Endothelial cell of umbilical vein (primary cell): ENCODE measurements at regions of chr2 and their contacts with region 1.

Region 1: GRCh38 chr2:119702918-119703401 is 24.0 kb downstream of the TMEM177 start:
- DNase-seq: peak; percentile 67
- H3K4me3 ChIP-seq: no peak overlapping the region
- H3K27ac ChIP-seq: no peak overlapping the region
- H3K4me1 ChIP-seq: no peaks in the 10 kb centered on the region
- H3K27me3 ChIP-seq: no peaks in the 10 kb centered on the region
- CTCF ChIP-seq: peak; percentile 96
- POLR2A ChIP-seq: no peak

Region 2: GRCh38 chr2:119598596-119599263 is 104.2 kb before region 1 on chr2:
- CTCF ChIA-PET with region 1: no interaction called
- POLR2A ChIA-PET with region 1: no interaction called
- dilution Hi-C with region 1: no loop called
- intact Hi-C with region 1: no loop called
- DNase-seq: no peak
- H3K4me3 ChIP-seq: no peak overlapping the region
- H3K27ac ChIP-seq: no peak overlapping the region
- H3K4me1 ChIP-seq: no peaks in the 10 kb centered on the region
- H3K27me3 ChIP-seq: peaks cover 2 to 8% of the 10 kb centered on the region in 2 experiments
- CTCF ChIP-seq: no peak
- POLR2A ChIP-seq: no peak

Region 3: DNA sequence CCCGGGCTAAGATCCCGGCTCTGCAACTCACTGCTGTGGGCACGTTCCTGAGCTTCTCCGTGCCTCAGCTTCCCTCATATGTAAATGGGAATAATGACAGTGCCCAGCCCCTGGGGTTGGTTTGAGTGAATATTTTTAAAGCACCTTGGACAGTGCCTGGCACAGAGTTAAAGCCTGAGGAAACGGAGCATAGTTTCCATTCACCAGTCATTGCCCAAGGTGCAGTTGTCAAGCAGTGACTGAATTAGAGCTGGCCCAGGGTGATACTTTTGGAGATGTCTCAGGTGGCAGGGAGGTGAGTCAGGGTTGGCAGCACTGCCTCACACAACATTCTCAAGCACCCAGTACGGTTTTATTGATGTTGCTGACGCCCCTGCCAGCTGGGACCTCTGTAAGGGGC is 11.8 kb before region 1 on chr2:
- CTCF ChIA-PET with region 1: interaction called, 12 read pairs
- POLR2A ChIA-PET with region 1: no interaction called
- dilution Hi-C with region 1: no loop called
- intact Hi-C with region 1: no loop called
- DNase-seq: no peak
- H3K4me3 ChIP-seq: no peak overlapping the region
- H3K27ac ChIP-seq: no peak overlapping the region
- H3K4me1 ChIP-seq: no peaks in the 10 kb centered on the region
- H3K27me3 ChIP-seq: no peaks in the 10 kb centered on the region
- CTCF ChIP-seq: no peak
- POLR2A ChIP-seq: no peak

Region 4: GRCh38 chr2:119713804-119714490 is 11.0 kb after region 1 on chr2:
- CTCF ChIA-PET with region 1: interaction called, 19 read pairs
- POLR2A ChIA-PET with region 1: no interaction called
- dilution Hi-C with region 1: no loop called
- intact Hi-C with region 1: no loop called
- DNase-seq: no peak
- H3K4me3 ChIP-seq: no peak overlapping the region
- H3K27ac ChIP-seq: no peak overlapping the region
- H3K4me1 ChIP-seq: no peaks in the 10 kb centered on the region
- H3K27me3 ChIP-seq: peaks cover 0 to 6% of the 10 kb centered on the region in 2 experiments
- CTCF ChIP-seq: no peak
- POLR2A ChIP-seq: no peak

Region 5: DNA sequence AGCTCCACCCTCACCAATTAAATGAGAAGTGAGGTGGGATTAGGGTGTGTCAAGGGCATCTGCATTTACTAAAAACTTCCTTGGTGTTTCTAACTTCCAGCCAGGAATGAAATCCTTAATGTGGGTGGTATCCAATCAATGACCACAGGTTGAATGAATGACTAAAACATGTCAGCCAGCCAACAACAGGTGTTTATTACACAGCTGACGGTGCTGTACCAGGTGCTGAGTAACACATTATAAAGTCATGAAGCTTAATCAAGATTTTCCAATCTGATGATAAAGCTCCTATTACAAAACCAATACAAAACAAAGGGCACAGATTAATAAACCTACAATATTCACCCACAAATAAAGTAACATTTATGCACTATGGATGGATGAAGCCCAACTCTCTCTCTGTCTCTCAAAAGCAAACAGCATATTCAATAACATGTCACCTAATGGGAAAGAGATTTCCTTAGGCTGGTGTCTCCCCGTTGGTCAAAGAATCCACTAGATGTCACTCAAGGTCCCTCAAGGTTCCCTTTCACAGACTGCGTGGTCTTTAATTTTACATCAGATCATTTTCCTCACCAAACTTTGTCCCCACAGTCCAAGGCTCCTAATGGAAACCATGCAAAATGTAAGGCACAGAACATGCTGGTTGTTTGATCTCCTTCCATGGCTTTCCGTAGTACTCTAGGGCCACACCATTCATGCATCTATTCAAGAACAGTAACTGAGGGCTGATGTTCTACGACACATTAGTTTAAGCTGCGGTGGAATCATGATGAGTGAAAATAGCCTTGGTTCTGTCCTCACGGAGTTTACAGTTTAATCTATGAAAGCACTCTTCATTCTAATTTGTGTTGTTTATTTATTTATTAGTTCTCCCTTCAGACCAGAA is 50.3 kb after region 1 on chr2:
- CTCF ChIA-PET with region 1: interaction called, 19 read pairs
- POLR2A ChIA-PET with region 1: no interaction called
- dilution Hi-C with region 1: no loop called
- intact Hi-C with region 1: loop called (anchors 1 kb)
- DNase-seq: peak; percentile 65
- H3K4me3 ChIP-seq: no peak overlapping the region
- H3K27ac ChIP-seq: no peak overlapping the region
- H3K4me1 ChIP-seq: peaks cover 14% of the 10 kb centered on the region
- H3K27me3 ChIP-seq: no peaks in the 10 kb centered on the region
- CTCF ChIP-seq: peak; percentile 67 to 68
- POLR2A ChIP-seq: no peak

Region 6: DNA sequence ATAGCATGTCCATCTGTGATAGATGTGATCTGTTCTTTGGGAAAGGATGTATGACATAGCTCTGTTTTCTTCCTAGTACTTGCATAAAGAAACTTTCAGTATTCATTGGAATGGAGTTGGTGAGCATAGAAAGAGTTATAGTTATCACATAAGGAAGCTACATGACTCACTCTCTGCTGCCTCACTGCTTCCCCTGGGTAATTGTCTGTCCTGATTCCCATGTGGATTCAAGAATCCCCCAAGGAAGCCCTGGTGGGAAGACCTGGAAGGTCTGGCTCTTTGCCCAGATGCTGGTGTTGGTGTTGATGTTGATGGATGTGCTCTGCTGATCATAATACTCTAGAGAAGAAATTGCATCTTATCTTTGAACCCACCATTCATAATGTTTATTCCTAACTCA is 117.3 kb after region 1 on chr2:
- CTCF ChIA-PET with region 1: interaction called, 55 read pairs
- POLR2A ChIA-PET with region 1: no interaction called
- dilution Hi-C with region 1: no loop called
- intact Hi-C with region 1: loop called (anchors 1 kb)
- DNase-seq: peak; percentile 97
- H3K4me3 ChIP-seq: no peak overlapping the region
- H3K27ac ChIP-seq: peak overlapping the region; percentile 78
- H3K4me1 ChIP-seq: peaks cover 34% of the 10 kb centered on the region
- H3K27me3 ChIP-seq: no peaks in the 10 kb centered on the region
- CTCF ChIP-seq: no peak
- POLR2A ChIP-seq: peak; percentile 30

Region 7: DNA sequence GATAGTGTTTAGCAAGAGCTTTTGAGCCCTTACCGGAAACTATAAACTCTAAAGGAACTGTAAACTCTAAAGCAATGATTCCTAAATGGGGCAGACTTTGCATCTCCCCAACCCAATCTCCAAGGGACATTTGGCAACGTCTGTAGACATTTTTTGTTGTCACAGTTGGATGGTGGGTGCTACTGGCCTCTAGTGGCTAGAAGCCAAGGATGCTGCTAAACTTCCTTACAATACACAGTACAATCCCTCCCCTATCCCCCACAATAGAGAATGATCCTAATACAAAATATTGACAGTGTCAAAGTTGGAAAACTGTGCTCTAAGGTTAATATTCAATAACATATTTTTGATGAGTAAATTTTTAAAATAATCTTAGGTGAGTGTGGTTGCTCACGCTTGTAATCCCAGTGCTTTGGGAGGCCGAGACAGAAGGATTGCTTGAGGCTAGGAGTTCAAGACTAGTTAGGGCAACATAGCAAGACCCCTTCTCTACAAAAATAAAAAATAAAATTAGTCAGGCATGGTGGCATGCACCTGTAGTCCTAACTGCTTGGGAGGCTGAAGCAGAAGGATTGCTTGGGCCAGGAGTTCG is 123.5 kb after region 1 on chr2:
- CTCF ChIA-PET with region 1: interaction called, 55 read pairs
- POLR2A ChIA-PET with region 1: no interaction called
- dilution Hi-C with region 1: no loop called
- intact Hi-C with region 1: loop called (anchors 1 kb)
- DNase-seq: peak; percentile 49
- H3K4me3 ChIP-seq: no peak overlapping the region
- H3K27ac ChIP-seq: no peak overlapping the region
- H3K4me1 ChIP-seq: peaks cover 9% of the 10 kb centered on the region
- H3K27me3 ChIP-seq: no peaks in the 10 kb centered on the region
- CTCF ChIP-seq: peak; percentile 68 to 71
- POLR2A ChIP-seq: no peak

Region 8: GRCh38 chr2:120012771-120013596 is 310.0 kb after region 1 on chr2 and contains the start of gene EPB41L5:
- CTCF ChIA-PET with region 1: interaction called, 11 read pairs
- POLR2A ChIA-PET with region 1: no interaction called
- dilution Hi-C with region 1: no loop called
- intact Hi-C with region 1: loop called (anchors 2 kb)
- DNase-seq: peak; percentile 90
- H3K4me3 ChIP-seq: peak within 1 kb of the TSS; percentile 35 to 88 (median 46)
- H3K27ac ChIP-seq: peak within 1 kb of the TSS; percentile 30
- H3K4me1 ChIP-seq: peaks cover 24% of the 10 kb centered on the region
- H3K27me3 ChIP-seq: no peaks in the 10 kb centered on the region
- CTCF ChIP-seq: no peak
- POLR2A ChIP-seq: no peak
- total RNA-seq, gene EPB41L5: 13.6 and 15.1 TPM in 2 replicates